Activated naive CD4-positive, alpha-beta T cell treated with anti-CD3 and anti-CD28 coated beads, Interleukin-2, amount 10 ng/mL, durations not matched to agents 7 days and 5 days (primary cell): ENCODE measurements at regions of chrX and their contacts with region 1.

Region 1: GRCh38 chrX:46758906-46759644 is at the start of gene SLC9A7:
- DNase-seq: peak; percentile 82
- H3K4me3 Mint-ChIP-seq: peak within 1 kb of the TSS; percentile 90
- H3K27ac Mint-ChIP-seq: peak within 1 kb of the TSS; percentile 80
- H3K4me1 Mint-ChIP-seq: peaks cover 25% of the 10 kb centered on the region
- H3K27me3 Mint-ChIP-seq: peaks cover 15% of the 10 kb centered on the region

Region 2: GRCh38 chrX:46796574-46797191 is 37.6 kb after region 1 on chrX:
- CTCF ChIA-PET with region 1: interaction called, 31 read pairs
- DNase-seq: peak; percentile 80
- H3K4me3 Mint-ChIP-seq: no peak overlapping the region
- H3K27ac Mint-ChIP-seq: no peak overlapping the region
- H3K4me1 Mint-ChIP-seq: peaks cover 21% of the 10 kb centered on the region
- H3K27me3 Mint-ChIP-seq: peaks cover 4% of the 10 kb centered on the region